PC-9 (cell line): ENCODE measurements at regions of chr7 and their contacts with region 1.

Region 1: DNA sequence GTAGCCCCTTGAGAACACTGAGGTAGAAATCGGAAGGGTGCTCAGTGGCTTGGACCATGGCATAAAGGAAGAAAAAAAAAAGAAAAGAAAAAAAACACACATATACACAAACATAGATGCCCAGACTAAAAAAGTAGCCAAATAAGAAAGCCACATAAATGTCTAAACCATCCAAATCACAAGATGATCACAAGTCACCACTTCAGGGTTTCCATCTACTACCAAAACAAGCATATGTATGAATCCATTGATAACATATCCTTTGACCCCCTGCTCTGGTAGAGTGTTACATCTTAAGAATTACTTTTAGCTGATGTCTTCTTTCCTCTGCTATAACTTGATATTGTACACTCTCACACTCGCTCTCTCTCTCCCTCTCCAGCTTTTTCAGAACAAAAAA is 245.9 kb downstream of the AHR start:
- DNase-seq: no peak
- H3K4me3 ChIP-seq: no peak overlapping the region
- H3K27ac ChIP-seq: no peak overlapping the region
- H3K4me1 ChIP-seq: peaks cover 7% of the 10 kb centered on the region; the same call in 1 of the 2 replicates
- H3K27me3 ChIP-seq: no peaks in the 10 kb centered on the region
- CTCF ChIP-seq: no peak

Region 2: DNA sequence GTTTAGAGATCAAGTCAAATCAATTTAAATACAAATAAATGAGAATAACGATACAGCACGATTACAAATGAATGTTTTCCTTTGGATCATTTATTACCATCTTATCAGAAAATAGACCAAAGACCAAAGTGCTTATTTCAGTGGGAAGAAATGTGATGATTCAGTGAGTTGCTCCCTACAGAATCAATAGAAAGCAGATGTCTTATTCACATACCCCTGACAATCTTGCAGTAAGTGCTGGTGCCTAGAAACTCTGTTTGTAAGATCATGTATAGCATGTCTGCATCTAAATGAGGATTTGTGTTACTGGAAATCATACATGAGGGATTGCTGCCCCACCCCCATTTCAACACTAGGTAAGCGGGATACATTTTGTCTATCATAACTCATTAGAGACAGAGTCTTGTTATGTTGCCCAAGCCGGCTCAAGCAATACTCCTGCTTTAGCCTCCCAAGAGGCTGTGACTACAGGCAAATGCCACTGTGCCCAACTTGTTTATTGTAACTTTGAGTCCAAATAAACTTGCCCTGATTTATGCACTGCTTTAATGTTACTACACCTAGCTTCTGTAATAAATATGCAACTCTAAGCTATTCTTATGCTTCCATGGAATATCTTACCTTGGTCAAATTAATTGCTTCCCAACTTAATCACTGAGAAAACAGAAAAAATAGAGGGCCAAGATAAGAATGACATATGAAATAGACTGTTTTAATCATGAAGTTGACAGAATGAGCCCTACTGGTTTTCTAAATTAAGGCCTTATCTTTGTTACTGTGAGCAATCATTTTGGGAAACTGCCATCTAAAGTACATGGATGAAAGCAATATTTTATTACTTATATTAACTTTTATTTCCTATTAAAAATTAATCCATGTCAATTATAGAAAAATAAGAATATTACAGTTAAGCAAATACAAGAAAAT is 163.4 kb before region 1 on chr7:
- CTCF ChIA-PET with region 1: no interaction called
- POLR2A ChIA-PET with region 1: interaction called, 10 read pairs
- intact Hi-C with region 1: no loop called
- DNase-seq: peak in 1 of 2 experiments; percentile 30
- H3K4me3 ChIP-seq: no peak overlapping the region
- H3K27ac ChIP-seq: no peak overlapping the region
- H3K4me1 ChIP-seq: peaks cover 10% of the 10 kb centered on the region
- H3K27me3 ChIP-seq: no peaks in the 10 kb centered on the region
- CTCF ChIP-seq: no peak

Region 3: GRCh38 chr7:18290223-18290622 is 745.8 kb after region 1 on chr7:
- CTCF ChIA-PET with region 1: no interaction called
- POLR2A ChIA-PET with region 1: no interaction called
- intact Hi-C with region 1: no loop called
- DNase-seq: no peak
- H3K4me3 ChIP-seq: no peak overlapping the region
- H3K27ac ChIP-seq: no peak overlapping the region
- H3K4me1 ChIP-seq: no peaks in the 10 kb centered on the region; the same call in 1 of the 2 replicates
- H3K27me3 ChIP-seq: no peaks in the 10 kb centered on the region
- CTCF ChIP-seq: no peak